Sciatic nerve (tissue), 2 donors: ENCODE measurements at regions of chr17 and their contacts with region 1.

Region 1: GRCh38 chr17:80491478-80492342 is 15.3 kb upstream of the NPTX1 start:
- DNase-seq: no peak
- ATAC-seq: peak; percentile 24

Region 2: DNA sequence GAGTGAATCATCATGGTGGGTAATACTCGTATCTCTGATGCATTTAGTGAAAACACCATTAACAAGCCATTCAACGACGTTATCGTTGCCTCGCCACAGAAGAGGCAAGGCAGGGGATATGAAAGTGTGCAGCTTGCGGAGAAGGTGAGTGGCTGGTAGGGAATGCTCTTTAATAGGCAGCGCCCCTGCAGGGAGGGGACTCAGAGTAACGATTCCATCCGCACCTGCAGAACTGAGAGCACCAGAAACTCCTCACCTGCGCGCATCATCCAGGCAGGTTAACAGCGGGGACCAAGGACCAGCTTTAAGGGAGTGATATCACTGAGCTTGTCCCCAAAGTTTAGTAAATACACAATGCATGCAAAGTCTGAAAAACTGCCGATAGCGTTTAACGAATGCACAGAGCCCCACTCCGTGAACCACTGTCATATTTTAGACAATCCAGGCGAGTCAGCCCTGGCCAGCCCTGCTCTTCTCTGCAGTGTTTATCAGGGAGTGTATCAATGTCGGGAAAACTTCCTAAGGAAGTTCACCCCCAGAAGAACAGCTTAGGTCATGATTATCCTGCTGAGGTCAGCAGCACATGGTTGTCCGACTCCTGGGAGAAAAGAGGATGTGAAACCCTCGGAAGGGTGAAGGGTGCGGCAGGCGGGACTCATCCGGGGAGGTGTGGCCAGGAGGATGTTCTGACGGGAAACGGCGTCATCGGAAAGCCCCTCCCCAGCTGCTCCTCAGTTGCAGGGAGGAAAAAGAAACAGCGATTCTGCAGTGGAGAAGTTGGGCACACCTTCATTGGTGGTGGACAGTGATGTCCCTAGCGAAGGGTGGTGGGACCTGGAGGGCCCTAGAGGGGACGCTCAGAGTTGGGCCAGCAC is 1846.1 kb before region 1 on chr17:
- intact Hi-C with region 1: loop called (anchors 5 kb)
- DNase-seq: peak; percentile 89
- ATAC-seq: peak; percentile 92